ENCODE measurements at regions of chr11 and their contacts with region 1.

Region 1: DNA sequence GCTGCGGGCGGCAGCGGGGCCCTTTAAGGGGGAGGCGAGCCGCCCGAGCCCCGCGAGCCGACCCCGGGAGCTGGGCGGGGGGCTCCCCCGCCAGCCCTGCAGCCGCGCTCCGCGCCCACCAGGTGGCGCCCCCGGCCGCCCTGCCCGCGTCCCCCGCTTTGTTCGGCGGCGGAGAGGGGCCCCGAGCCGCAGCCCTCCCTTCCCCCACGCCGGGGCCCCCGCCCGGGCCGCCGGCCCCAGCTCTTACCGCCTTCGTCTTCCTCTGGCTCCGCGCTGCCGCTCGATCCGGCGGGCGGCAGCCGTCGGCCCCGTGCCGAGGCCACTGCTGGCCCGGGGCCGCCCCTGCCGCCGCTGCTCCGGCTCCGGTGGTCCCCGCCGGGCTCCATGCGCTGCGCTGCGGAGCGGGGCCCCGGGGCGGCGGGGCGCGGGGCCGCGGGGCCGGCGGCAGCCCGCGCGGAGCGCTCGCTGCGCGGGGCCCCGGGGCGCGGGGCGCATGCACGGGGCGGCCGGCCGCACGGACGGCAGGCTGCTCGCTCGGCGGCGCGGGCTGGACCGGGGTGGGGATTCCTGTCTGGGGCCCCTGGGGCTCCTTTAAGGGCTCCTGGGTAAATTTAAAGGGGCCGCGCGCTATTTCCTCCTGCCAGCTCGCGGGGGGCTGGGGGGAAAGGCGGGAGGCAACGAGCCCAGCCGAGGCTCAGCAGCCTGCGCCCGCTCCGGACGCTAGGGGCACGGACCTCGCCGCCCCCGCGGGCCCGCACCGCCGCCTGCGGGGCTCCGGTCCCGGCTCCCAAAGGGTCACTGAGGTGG is at the start of gene ZFTA:
- DNase-seq: peak; percentile 58
- H3K27ac ChIP-seq: peak within 1 kb of the TSS; percentile 78
- CTCF ChIP-seq: peak; percentile 91

Region 2: GRCh38 chr11:63663809-63664208 is 104.6 kb before region 1 on chr11:
- CTCF ChIA-PET with region 1: no interaction called
- POLR2A ChIA-PET with region 1: no interaction called
- DNase-seq: peak; percentile 75
- H3K27ac ChIP-seq: peak overlapping the region; percentile 96
- CTCF ChIP-seq: no peak

Region 3: DNA sequence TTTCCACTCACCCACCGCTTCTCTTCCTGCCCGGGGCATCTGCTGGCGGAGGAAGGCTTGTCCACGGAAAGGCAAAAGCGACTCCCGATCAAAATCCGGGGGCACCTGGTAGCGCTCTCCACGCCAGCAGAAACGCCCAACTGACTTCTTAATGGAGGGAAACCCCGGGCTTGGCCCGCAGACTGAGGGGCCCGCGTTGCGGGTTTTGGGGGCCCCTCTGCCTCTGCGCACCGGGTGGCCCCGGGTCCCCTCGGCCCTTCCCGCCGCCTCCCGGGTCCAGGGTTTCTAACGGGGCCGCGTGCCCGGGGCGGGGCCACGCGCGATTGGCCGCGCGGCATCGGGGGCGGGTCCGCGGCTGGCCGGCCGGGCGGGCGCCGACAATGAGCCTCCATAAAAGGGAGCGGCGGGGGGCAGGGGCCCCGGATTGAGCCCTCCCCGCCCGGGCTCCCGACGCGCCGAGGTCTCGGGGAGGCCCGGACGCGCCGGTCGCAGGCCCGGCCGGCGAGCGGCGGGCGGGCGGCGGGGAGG is 44.7 kb after region 1 on chr11 and contains the start of gene SPINDOC:
- CTCF ChIA-PET with region 1: interaction called, 12 read pairs
- POLR2A ChIA-PET with region 1: interaction called, 3 read pairs
- DNase-seq: peak; percentile 89
- H3K27ac ChIP-seq: peak within 1 kb of the TSS; percentile 83
- CTCF ChIP-seq: no peak

Region 4: DNA sequence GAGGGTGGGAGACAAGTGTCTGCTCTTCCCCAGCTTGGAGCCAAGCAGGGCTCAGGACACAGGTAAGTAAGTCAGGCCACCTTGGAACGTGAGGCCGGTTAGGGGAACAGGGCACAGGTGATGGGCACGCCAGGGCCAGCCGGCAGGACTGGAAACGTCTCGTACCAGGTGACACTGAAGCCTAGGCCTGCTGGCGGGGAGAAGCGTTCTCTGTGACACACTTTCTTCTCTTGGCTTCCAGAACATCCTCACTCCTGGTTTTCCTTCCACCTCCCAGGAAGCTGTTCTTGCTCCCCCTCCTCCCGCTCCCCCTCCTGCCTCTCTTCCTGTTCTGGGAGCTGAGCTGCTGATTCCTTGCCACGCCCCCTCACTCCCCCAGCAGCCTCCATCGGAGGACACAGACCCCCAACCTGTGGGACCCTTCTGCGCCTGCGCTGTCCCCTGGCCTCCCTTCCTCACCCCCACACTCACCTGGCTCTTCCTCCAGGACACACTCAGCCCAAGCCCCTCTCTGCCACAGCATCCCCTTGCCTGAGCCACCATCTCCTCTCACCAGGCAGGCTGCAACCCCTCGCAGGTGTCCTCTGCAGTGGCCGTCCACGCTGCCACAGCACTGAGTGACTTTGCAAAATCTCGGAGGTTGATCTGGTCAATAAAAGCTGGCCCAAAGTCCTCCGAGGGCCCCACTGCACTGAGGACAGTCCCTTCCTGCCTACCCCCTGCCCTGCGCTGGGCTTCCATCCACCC is 791.4 kb after region 1 on chr11:
- CTCF ChIA-PET with region 1: interaction called, 11 read pairs
- POLR2A ChIA-PET with region 1: no interaction called
- DNase-seq: no peak
- H3K27ac ChIP-seq: no peak overlapping the region
- CTCF ChIP-seq: no peak